HepG2 (cell line): ENCODE measurements at regions of chr9 and their contacts with region 1.

Region 1: GRCh38 chr9:128088253-128088945 is 20.4 kb downstream of the SLC25A25 start:
- DNase-seq: no peak
- ATAC-seq: peak; percentile 69
- H3K4me3 ChIP-seq: no peak overlapping the region
- H3K27ac ChIP-seq: peak overlapping the region; percentile 8
- H3K4me1 ChIP-seq: peaks cover 12% of the 10 kb centered on the region
- H3K27me3 ChIP-seq: no peaks in the 10 kb centered on the region
- CTCF ChIP-seq: peak; percentile 49
- EP300 ChIP-seq: no peak
- POLR2A ChIP-seq: no peak
- RAD21 ChIP-seq: no peak

Region 2: DNA sequence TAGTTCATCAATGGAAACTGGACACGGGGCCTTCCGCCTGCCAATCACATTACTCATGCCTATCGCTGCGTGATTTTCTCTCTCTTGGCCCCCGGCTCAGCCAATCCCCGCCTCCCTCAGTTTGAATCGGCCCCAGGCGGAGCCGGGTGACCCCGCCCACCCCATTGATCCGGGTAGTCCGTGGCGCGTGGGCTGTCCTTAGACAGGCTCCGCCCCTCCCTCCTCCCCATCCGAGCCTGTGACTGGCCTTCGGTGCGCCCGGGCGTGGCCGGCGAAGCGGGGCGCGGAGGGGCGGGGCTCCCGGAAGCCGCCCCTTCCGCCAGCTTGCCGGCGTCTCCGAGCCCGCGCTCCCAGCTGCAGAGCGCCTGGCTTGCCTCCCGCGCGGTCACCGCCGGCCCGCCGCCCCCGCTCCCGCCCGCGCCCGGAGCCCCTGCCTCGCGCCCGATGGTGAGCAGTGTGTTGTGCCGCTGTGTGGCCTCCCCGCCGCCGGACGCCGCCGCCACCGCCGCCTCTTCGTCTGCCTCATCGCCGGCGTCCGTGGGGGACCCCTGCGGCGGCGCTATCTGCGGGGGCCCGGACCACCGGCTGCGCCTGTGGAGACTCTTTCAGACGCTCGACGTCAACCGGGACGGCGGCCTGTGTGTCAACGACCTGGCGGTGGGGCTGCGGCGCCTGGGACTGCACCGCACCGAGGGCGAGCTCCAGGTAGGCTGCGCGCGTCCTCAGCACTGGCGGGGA is 20.4 kb before region 1 on chr9 and contains the start of gene SLC25A25:
- CTCF ChIA-PET with region 1: no interaction called
- POLR2A ChIA-PET with region 1: no interaction called
- in situ Hi-C with region 1: no loop called
- intact Hi-C with region 1: no loop called
- DNase-seq: peak; percentile 98
- ATAC-seq: peak; percentile 83
- H3K4me3 ChIP-seq: peak within 1 kb of the TSS; percentile 78 to 88 (median 85)
- H3K27ac ChIP-seq: peak within 1 kb of the TSS; percentile 98
- H3K4me1 ChIP-seq: peaks cover 58% of the 10 kb centered on the region
- H3K27me3 ChIP-seq: no peaks in the 10 kb centered on the region; a peak in 1 of 5 replicates
- CTCF ChIP-seq: no peak
- EP300 ChIP-seq: no peak
- POLR2A ChIP-seq: no peak; a peak in 1 of 4 replicates
- RAD21 ChIP-seq: peak; percentile 41; the same call in 1 of the 2 replicates
- total RNA-seq, gene SLC25A25: 18.5 and 24.8 TPM in 2 replicates

Region 3: GRCh38 chr9:128098297-128099230 is 10.2 kb after region 1 on chr9:
- CTCF ChIA-PET with region 1: no interaction called
- POLR2A ChIA-PET with region 1: interaction called, 17 read pairs
- in situ Hi-C with region 1: no loop called
- intact Hi-C with region 1: no loop called
- DNase-seq: peak; percentile 98
- ATAC-seq: peak; percentile 75
- H3K4me3 ChIP-seq: peak overlapping the region; percentile 72 to 89 (median 76)
- H3K27ac ChIP-seq: peak overlapping the region; percentile 92
- H3K4me1 ChIP-seq: peaks cover 86% of the 10 kb centered on the region
- H3K27me3 ChIP-seq: no peaks in the 10 kb centered on the region; a peak in 1 of 5 replicates
- CTCF ChIP-seq: no peak
- EP300 ChIP-seq: peak in 1 of 2 experiments; percentile 43; a peak in 2 of 4 replicates
- POLR2A ChIP-seq: peak in 1 of 2 experiments; percentile 99; a peak in 2 of 4 replicates
- RAD21 ChIP-seq: no peak